Right ventricle myocardium superior (tissue), 1 donor: ENCODE measurements at regions of chr9 and their contacts with region 1.

Region 1: GRCh38 chr9:105157130-105157583 is 87.3 kb upstream of the SLC44A1 start:
- DNase-seq: peak; percentile 71
- ATAC-seq: peak; percentile 93

Region 2: DNA sequence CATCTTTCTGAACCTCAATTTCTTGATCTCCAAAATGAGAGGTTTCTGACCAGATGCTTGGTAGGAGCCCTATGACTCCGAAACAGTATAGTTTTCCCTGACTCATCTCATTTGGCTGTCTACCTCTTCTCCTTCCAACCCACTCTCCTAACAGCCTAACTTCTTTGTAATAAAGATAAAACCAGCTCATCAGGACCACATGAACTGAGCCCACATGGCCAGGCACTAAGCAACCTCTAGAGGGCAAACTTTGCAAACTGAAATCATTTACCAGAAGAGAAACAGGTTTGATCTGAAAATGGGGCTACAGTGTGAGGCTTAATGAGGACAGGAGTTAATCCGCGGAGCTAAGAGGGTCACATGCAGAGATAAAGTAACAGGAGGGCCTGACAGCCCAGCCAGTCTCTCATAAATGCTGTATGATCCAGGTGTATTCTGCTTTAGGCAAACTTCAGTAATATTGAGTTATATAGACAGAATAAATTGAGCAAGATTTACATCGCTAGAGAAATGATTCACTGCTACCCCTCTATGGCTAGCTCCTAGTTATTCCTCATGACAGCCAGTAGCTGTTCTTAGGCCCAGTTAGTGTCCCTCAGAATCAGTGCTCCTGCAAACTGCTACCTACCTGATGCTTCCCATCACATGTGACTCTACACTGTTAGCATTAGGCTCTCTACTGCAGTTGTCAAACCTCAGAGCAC is 293.8 kb before region 1 on chr9:
- intact Hi-C with region 1: loop called (anchors 5 kb)
- DNase-seq: peak; percentile 48
- ATAC-seq: peak; percentile 68

Region 3: DNA sequence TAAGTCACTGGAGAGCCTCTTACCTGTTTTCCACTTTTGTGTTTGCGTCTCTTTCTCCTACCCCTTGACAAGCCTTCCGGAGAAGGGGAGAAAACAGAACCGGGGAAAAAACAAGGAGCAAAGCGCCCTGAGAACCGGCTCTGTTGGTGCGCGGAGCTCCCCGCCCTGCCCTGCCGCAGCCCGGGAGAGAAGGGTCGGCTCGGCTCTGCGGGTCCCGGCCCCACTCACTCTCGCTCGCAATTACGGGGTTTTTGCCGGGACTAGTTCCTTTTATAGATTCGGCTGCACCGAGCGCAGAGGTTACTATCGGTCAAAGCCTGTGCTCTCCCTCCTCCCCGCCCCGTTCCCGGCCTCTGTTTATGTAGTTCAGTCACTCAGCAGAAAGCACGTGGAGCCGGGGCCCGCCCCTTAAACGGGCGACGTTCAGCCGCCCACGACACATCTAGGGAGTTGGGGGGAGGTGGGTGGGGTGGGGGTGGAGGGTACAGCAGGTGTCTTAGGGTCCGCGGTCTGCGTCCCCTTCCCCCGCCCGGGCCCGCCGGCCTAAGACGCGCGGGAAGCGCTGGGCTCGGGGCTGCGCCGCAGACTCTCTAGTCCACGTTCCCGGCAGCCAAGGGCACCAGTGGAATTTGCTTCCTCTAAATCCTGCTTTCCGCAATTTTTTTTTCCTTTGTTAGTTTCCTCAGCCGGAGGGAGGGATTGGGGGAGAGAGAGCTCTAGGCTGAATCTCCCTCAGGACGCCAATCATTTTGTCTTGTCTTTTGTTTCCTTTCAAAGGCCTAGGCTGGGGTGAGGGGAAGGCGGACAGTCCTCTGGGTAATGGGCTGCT is 229.0 kb before region 1 on chr9 and contains the start of gene ABCA1:
- intact Hi-C with region 1: loop called (anchors 2 kb)
- DNase-seq: peak; percentile 95
- ATAC-seq: peak; percentile 85
- total RNA-seq, gene ABCA1: 12.1 TPM

Region 4: GRCh38 chr9:104968025-104968982 is 188.9 kb before region 1 on chr9:
- intact Hi-C with region 1: loop called (anchors 5 kb)
- DNase-seq: peak; percentile 95
- ATAC-seq: peak; percentile 97

Region 5: DNA sequence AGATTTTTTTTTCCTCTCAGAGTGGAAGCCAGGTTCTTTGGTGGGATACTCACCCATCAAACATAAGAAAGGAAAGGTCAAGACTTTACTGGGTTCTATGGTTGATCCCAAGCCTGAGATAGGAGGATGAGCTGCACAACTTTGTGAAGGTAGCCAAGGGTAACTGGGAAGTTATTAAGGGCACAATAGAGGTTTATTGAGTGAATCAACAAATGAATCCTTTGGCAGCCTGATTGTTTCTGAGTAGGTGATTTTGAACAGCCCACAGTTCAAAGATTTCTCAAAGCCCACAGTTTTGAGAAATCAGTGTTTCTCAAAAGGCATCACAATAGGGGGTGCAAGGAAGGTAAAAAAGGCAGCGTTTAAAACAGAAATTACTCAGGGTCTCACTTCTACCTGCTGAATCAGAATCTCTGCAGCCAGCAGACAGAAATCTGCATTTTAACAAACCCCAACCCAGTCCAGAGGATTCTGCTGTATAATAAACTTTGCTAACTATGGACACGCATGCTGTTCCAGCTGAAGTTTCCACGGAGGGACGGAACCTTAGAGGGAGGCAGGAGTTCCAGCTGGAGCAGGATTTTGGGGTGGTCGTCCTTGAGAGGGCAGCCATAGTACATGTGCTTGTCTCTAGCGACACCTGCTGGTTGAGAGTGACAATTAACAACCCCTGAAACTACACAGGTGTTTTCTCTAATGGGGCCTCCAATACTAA is 257.9 kb after region 1 on chr9:
- intact Hi-C with region 1: loop called (anchors 5 kb)
- DNase-seq: no peak
- ATAC-seq: peak; percentile 87